GM12878 (cell line): ENCODE measurements at regions of chr3 and their contacts with region 1.

Region 1: DNA sequence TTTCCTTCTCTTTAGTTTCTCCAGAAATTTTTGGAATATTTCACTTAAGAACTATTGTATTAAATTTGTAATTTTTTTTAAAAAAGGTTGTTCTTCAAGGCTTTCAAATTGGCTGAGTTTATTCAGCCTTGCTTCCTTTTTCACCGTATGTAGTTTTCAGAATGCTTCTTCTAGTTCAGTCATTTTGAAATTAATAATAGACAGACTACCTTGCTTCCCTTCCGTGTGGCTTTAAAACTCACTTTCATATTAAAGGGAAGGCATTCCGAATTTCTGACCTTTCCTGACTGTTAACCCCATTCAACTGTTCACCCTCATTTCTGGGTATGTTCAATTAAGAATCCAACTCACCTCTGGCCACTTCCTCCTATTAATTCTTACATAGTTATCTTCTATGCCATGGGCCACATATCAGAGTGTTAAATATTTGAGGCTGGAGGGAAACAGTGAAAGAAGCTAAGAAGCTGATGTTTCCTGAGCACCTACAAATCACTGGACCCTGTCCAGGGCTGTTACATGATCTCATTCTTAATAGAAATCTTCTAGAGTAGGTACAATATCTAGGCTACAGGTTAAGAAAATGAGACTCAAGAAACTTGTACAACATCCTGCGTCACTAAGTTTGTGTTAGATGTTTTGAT is 237.5 kb downstream of the P3H2 start:
- DNase-seq: no peak
- ATAC-seq: peak; percentile 69
- H3K4me3 ChIP-seq: no peak overlapping the region
- H3K27ac ChIP-seq: no peak overlapping the region
- H3K4me1 ChIP-seq: no peaks in the 10 kb centered on the region
- H3K27me3 ChIP-seq: no peaks in the 10 kb centered on the region
- CTCF ChIP-seq: no peak
- EP300 ChIP-seq: no peak
- POLR2A ChIP-seq: no peak
- RAD21 ChIP-seq: no peak

Region 2: DNA sequence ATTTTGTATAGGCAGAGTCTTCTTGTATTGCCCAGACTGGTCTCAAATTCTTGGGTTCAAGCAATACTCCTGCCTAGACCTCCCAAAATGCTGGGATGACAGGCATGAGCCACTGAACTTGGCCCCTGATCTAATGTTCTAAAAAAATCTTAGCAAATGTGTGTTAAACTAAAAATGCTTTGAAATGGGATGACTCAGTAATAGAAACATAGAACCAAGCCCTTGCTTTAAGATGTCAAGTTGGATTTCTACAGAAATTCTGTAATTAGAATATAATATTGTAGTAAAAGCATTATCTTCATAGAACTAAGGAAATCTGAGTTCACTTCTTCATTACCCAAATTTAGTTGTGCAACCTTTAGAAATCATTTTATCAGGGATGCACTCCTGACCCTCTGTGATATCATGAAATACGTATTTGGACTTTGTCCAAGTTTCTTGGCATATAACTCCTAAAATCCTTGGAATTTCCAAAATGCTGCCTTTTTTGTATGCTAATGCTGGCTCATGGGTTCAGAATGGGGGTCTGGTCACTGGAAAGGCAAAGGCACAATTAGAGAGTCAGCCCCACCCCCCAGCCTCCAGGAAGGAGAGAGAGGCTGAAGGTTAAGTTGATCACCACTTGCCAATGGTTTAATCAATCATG is 34.7 kb before region 1 on chr3:
- CTCF ChIA-PET with region 1: no interaction called
- POLR2A ChIA-PET with region 1: no interaction called
- RAD21 ChIA-PET with region 1: no interaction called
- SMC1A ChIA-PET with region 1: no interaction called
- in situ Hi-C with region 1: no loop called
- intact Hi-C with region 1: loop called (anchors 1 kb)
- DNase-seq: no peak
- ATAC-seq: no peak
- H3K4me3 ChIP-seq: no peak overlapping the region
- H3K27ac ChIP-seq: no peak overlapping the region
- H3K4me1 ChIP-seq: no peaks in the 10 kb centered on the region
- H3K27me3 ChIP-seq: no peaks in the 10 kb centered on the region
- CTCF ChIP-seq: no peak
- EP300 ChIP-seq: no peak
- POLR2A ChIP-seq: no peak
- RAD21 ChIP-seq: no peak